GM12878 (cell line): ENCODE measurements at regions of chr22 and their contacts with region 1.

Region 1: GRCh38 chr22:31313366-31314147 is 21.3 kb upstream of the PIK3IP1 start:
- DNase-seq: no peak
- ATAC-seq: peak; percentile 76
- H3K4me3 ChIP-seq: no peak overlapping the region
- H3K27ac ChIP-seq: no peak overlapping the region
- H3K4me1 ChIP-seq: peaks cover under 1% of the 10 kb centered on the region
- H3K27me3 ChIP-seq: no peaks in the 10 kb centered on the region
- CTCF ChIP-seq: peak; percentile 78 to 89 (median 82)
- EP300 ChIP-seq: no peak
- POLR2A ChIP-seq: no peak
- RAD21 ChIP-seq: peak; percentile 64

Region 2: DNA sequence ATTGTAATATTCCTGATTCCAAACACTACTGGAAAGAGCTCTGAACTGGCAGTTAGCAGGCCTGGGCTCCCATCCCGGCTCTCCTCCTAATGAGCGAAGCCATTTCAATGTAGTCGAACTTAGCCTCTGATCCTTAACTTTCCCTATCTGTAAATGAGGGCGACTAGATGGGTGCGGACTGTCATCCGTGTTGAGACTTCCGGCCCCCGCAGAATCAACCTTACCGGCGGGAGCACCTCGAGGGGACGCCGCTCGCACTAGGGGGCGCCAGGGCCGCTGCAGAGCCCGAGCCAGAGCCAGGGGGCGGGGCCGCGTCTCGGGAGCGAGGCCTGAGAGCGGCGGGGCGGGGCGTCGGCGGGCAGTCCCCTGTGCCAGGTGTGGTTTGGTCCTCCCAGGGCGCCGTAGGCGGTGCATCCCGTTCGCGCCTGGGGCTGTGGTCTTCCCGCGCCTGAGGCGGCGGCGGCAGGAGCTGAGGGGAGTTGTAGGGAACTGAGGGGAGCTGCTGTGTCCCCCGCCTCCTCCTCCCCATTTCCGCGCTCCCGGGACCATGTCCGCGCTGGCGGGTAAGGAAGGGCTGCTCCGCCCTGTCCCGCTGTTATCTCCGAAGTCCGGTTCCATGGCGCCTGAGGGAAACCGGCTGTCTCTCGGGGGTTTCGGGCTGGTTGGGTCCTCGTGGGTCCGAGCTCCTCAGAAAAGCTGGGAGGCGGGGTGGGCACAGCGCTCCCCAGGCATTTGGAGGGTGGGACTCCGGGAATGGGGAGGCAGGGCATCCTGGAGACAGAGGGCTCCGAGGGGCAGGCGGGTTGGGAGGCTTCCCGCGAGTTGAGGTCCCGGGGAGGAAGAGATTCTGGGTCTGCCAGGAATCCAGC is 101.5 kb before region 1 on chr22 and contains the start of gene LIMK2:
- CTCF ChIA-PET with region 1: interaction called, 47 read pairs
- POLR2A ChIA-PET with region 1: no interaction called
- RAD21 ChIA-PET with region 1: interaction called, 5 read pairs
- SMC1A ChIA-PET with region 1: interaction called, 5 read pairs
- in situ Hi-C with region 1: no loop called
- intact Hi-C with region 1: no loop called
- DNase-seq: peak; percentile 60
- ATAC-seq: peak; percentile 97
- H3K4me3 ChIP-seq: peak within 1 kb of the TSS; percentile 84
- H3K27ac ChIP-seq: peak within 1 kb of the TSS; percentile 87
- H3K4me1 ChIP-seq: peaks cover 4% of the 10 kb centered on the region
- H3K27me3 ChIP-seq: no peaks in the 10 kb centered on the region
- CTCF ChIP-seq: peak; percentile 72 to 95 (median 86)
- EP300 ChIP-seq: no peak
- POLR2A ChIP-seq: peak; percentile 91
- RAD21 ChIP-seq: peak; percentile 77
- polyA plus RNA-seq, gene LIMK2: 2.9 to 5.0 TPM

Region 3: GRCh38 chr22:31241936-31242335 is 71.6 kb before region 1 on chr22:
- CTCF ChIA-PET with region 1: interaction called, 10 read pairs
- POLR2A ChIA-PET with region 1: no interaction called
- RAD21 ChIA-PET with region 1: no interaction called
- SMC1A ChIA-PET with region 1: no interaction called
- in situ Hi-C with region 1: no loop called
- intact Hi-C with region 1: no loop called
- DNase-seq: no peak
- ATAC-seq: no peak
- H3K4me3 ChIP-seq: no peak overlapping the region
- H3K27ac ChIP-seq: no peak overlapping the region
- H3K4me1 ChIP-seq: peaks cover 6% of the 10 kb centered on the region
- H3K27me3 ChIP-seq: no peaks in the 10 kb centered on the region
- CTCF ChIP-seq: no peak
- EP300 ChIP-seq: no peak
- POLR2A ChIP-seq: no peak
- RAD21 ChIP-seq: no peak

Region 4: DNA sequence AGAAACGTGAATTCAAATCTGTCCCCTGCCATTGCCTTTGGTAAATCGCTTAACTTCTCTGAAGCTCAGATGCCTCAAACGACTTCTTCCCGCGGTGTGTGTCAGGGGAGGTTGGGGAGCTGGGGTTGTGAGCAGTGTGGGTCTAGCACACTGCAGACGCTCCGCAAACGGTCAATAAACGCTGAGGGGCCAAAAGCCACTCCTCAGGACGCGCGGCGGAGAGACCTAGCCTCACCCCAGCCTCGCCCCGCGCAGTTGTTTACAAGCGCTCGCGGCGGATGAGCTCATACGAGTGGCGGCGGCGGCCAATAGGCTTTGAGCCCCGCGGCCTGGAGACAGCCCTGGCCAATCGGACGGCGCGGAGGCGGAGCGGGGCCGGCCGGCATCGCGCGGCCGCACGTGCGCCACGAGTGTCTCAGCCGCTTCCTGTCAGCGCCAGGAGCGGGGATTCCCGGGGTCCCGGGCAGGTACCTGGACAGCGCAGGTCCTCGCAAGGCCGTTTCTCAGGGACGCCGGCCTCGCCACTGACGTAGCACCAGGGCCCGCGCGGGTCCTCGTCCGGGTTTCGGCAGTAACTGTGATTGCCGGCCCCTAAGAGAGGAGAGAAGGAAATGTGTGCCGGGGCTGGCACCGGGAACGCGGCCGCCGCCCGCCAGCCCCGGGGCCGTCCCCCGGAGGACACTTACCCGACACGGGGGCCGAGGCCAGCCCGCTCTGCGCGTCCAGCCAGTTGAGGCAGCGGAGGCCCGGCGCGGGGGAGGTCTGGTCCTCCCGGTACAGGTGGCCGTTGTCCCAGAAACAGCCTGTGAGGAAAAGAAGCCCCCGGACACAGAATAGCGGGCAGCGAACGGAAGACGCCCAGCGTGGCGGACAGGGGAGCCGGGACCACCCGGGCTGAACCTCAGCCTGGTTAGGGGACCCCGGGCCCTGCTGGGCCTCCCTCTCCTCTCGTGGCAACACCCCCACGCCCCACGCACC is 22.8 kb before region 1 on chr22:
- CTCF ChIA-PET with region 1: interaction called, 91 read pairs
- POLR2A ChIA-PET with region 1: interaction called, 6 read pairs
- RAD21 ChIA-PET with region 1: interaction called, 7 read pairs
- SMC1A ChIA-PET with region 1: interaction called, 11 read pairs
- in situ Hi-C with region 1: no loop called
- intact Hi-C with region 1: no loop called
- DNase-seq: peak; percentile 48
- ATAC-seq: peak; percentile 96
- H3K4me3 ChIP-seq: peak overlapping the region; percentile 82
- H3K27ac ChIP-seq: peak overlapping the region; percentile 72
- H3K4me1 ChIP-seq: peaks cover 32% of the 10 kb centered on the region
- H3K27me3 ChIP-seq: no peaks in the 10 kb centered on the region
- CTCF ChIP-seq: no peak
- EP300 ChIP-seq: peak in 1 of 2 experiments; percentile 45; a peak in 1 of 4 replicates
- POLR2A ChIP-seq: peak; percentile 87
- RAD21 ChIP-seq: no peak

Region 5: GRCh38 chr22:31295831-31296657 is 17.5 kb before region 1 on chr22:
- CTCF ChIA-PET with region 1: interaction called, 91 read pairs
- POLR2A ChIA-PET with region 1: interaction called, 5 read pairs
- RAD21 ChIA-PET with region 1: interaction called, 7 read pairs
- SMC1A ChIA-PET with region 1: interaction called, 11 read pairs
- in situ Hi-C with region 1: no loop called
- intact Hi-C with region 1: no loop called
- DNase-seq: no peak
- ATAC-seq: no peak
- H3K4me3 ChIP-seq: no peak overlapping the region
- H3K27ac ChIP-seq: no peak overlapping the region
- H3K4me1 ChIP-seq: peaks cover 4% of the 10 kb centered on the region; the same call in 1 of the 2 replicates
- H3K27me3 ChIP-seq: no peaks in the 10 kb centered on the region
- CTCF ChIP-seq: no peak
- EP300 ChIP-seq: no peak
- POLR2A ChIP-seq: no peak
- RAD21 ChIP-seq: no peak

Region 6: DNA sequence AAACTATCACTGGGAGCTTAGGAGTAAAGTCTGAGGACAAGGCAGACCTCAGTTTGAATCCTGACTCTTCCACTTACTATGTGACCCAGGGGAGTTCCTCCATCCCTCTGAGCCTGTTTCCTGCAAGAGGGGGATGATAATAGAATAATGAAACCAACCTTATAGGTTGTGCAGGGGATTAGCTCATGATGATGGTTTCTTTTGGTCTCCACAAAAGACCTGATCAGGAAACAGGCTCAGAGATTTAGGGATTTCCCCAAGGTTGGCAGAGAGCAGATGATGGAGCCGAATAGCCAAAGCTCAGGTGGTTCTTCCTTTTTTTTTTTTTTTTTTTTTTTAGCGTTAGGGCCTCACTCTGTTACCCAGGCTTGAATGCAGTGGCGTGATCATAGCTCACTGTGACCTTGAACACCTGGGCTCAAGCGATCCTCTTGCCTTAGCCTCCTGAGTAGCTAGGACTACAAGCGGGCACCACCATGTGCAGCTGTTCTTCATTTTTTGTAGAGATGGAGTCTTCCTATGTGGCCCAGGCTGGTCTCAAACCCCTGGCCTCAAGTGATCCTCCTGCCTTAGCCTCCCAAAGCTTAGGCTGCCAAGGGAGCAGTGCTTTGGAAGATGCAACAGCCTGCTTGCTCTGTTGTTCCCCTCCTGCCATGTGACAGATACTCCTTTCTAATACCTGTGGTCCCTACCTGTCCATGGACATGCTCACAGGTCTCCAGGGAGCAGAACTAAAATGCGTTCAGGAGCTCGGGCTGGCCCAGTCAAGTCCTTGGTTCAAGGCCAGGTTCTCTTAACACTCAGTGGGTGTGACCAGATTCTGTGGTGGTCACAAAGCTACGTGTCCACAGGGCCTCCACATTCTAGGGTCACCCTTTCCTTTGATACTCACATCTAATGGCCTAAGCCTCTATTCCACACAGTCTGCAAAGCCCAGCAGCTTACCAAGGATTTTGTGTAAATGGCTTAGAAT is 10.3 kb after region 1 on chr22:
- CTCF ChIA-PET with region 1: interaction called, 16 read pairs
- POLR2A ChIA-PET with region 1: no interaction called
- RAD21 ChIA-PET with region 1: no interaction called
- SMC1A ChIA-PET with region 1: interaction called, 4 read pairs
- in situ Hi-C with region 1: no loop called
- intact Hi-C with region 1: no loop called
- DNase-seq: no peak
- ATAC-seq: no peak
- H3K4me3 ChIP-seq: no peak overlapping the region
- H3K27ac ChIP-seq: no peak overlapping the region
- H3K4me1 ChIP-seq: no peaks in the 10 kb centered on the region
- H3K27me3 ChIP-seq: no peaks in the 10 kb centered on the region
- CTCF ChIP-seq: no peak
- EP300 ChIP-seq: no peak
- POLR2A ChIP-seq: no peak
- RAD21 ChIP-seq: no peak

Region 7: DNA sequence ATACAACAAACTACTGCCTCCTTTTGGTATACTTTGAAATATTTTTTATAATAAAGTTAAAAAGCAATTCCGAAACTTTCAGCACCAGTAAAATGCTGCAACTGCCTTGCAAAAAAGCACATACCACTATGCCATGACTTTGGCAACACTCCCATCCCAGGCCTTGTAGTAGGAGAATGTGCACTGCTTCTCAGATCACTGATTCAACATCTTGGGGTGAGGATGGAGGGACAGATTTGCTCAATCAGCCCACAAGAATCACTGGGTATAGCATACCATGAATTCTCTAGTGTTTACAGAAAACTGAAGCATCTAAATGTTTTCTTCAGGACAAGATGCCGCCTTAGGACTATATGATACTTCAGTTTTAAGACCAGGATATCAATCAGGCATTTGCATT is 161.2 kb after region 1 on chr22:
- CTCF ChIA-PET with region 1: no interaction called
- POLR2A ChIA-PET with region 1: no interaction called
- RAD21 ChIA-PET with region 1: no interaction called
- SMC1A ChIA-PET with region 1: no interaction called
- in situ Hi-C with region 1: no loop called
- intact Hi-C with region 1: no loop called
- DNase-seq: no peak
- ATAC-seq: no peak
- H3K4me3 ChIP-seq: no peak overlapping the region
- H3K27ac ChIP-seq: no peak overlapping the region
- H3K4me1 ChIP-seq: peaks cover 19% of the 10 kb centered on the region
- H3K27me3 ChIP-seq: no peaks in the 10 kb centered on the region
- CTCF ChIP-seq: no peak
- EP300 ChIP-seq: no peak
- POLR2A ChIP-seq: no peak
- RAD21 ChIP-seq: no peak

Region 8: DNA sequence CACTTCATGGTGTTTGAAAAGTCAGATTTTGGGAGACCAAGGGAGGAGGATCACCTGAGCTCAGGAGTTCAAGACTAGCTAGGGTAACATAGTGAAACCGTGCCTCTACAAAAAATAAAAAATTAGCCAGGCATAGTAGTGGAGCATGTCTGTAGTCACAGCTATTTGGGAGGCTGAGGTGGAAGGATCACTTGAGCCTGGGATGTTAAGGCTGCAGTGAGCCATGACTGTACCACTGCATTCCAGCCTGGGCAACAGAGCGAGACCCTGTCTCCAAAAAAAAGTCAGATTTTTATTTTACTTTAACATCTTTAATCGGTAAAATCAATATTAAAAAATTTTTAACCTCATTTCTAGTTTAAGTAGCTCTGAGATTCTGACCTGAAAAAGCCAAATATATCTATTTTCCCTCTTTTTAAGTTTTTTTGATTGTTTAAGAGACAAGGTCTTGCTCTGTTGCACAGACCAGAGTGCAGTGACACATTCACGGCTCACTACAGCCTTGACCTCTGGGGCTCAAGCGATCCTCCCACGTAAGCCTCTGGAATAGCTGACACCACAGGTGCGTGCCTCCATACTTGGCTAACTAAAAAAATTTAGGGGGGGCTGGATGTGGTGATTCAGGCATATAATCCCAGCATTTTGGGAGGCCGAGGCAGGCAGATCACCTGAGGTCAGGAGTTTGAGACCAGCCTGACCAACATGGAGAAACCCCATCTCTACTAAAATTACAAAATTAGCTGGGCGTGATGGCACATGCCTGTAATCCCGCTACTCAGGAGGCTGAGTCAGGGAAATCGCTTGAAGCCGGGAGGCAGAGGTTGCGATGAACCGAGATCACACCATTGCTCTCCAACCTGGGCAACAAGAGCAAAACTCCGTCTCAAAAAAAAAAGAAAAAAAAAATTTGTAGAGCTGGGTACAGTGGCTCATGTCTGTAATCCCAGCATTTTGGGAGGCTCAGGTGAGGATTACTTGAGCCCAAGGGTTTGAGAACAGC is 231.2 kb after region 1 on chr22:
- CTCF ChIA-PET with region 1: no interaction called
- POLR2A ChIA-PET with region 1: no interaction called
- RAD21 ChIA-PET with region 1: no interaction called
- SMC1A ChIA-PET with region 1: no interaction called
- in situ Hi-C with region 1: no loop called
- intact Hi-C with region 1: no loop called
- DNase-seq: no peak
- ATAC-seq: no peak
- H3K4me3 ChIP-seq: no peak overlapping the region
- H3K27ac ChIP-seq: peak overlapping the region; percentile 61
- H3K4me1 ChIP-seq: peaks cover 15% of the 10 kb centered on the region
- H3K27me3 ChIP-seq: no peaks in the 10 kb centered on the region
- CTCF ChIP-seq: no peak
- EP300 ChIP-seq: no peak
- POLR2A ChIP-seq: no peak
- RAD21 ChIP-seq: no peak